Activated CD8-positive, alpha-beta T cell treated with anti-CD3 and anti-CD28 coated beads for 36 hours (primary cell): ENCODE measurements at regions of chr17 and their contacts with region 1.

Region 1: DNA sequence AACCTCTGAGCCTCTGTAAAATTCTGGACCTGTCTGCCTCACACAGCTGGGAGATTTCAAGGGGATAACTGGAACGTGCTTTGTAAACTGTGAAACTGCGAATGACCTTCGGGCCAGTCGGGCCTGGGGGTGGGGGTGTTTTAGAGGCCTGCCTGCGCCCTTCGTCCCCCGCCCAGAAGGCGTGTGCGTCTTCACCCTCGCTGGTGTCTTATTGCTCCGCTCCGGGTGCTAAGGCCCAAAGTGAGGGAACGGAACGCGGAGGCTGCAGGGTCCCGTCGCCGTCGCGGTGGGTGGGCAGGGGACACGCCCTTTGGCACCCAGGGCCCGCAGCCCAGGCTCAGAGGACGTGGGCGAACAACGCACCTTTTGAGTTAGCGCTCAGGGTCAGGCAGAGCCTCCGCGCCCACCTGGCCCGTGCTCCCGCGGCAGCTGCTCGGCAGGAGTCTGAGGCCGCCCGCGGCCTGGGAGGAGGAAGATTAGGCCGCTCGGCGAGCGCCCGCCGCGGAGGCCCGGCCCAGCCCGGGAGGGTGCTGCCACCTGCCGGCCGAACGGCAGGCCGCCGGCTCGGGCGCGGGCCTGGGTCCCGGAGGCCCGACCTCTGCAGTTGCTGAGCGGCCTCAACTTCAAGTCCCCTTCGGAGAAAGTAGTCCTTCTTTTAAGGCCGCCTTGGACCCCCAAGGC is 29.7 kb downstream of the DCAKD start:
- DNase-seq: peak; percentile 65
- ATAC-seq: peak; percentile 68
- H3K4me3 Mint-ChIP-seq: peak overlapping the region; percentile 33
- H3K27ac Mint-ChIP-seq: no peak overlapping the region
- H3K4me1 Mint-ChIP-seq: peaks cover 21% of the 10 kb centered on the region
- H3K27me3 Mint-ChIP-seq: peaks cover 33% of the 10 kb centered on the region
- CTCF ChIP-seq: peak; percentile 96

Region 2: DNA sequence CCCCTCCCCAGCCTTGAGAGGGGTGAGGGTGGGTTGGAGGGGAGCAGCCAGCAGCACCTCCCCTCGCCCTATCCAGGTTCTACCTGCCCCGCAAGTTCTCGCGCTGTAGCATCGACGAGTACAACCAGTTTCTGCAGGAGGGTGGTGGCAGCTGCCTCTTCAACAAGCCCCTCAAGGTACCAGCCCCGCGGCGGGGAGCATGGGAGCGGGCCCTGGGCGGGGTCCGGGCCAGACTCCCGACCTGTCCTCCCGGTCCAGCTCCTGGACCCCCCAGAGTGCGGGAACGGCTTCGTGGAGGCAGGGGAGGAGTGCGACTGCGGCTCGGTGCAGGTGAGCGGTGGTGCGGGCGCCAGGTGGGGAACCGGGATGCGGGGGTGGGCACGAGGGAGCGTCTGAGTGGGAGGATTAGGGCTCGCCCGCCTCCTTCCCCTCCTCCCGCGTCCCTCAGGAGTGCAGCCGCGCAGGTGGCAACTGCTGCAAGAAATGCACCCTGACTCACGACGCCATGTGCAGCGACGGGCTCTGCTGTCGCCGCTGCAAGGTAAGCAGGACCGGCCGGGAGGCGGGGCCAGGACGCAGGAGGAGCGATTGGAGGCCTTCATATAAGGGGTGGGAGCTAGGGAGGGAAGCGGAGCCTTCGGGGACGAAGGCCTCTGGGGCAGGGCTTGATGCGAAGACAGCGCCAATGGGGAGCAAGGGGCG is 246.5 kb before region 1 on chr17:
- CTCF ChIA-PET with region 1: interaction called, 13 read pairs
- POLR2A ChIA-PET with region 1: interaction called, 3 read pairs
- intact Hi-C with region 1: no loop called
- DNase-seq: peak; percentile 99
- ATAC-seq: peak; percentile 97
- H3K4me3 Mint-ChIP-seq: peak overlapping the region; percentile 79
- H3K27ac Mint-ChIP-seq: no peak overlapping the region
- H3K4me1 Mint-ChIP-seq: peaks cover 5% of the 10 kb centered on the region
- H3K27me3 Mint-ChIP-seq: peaks cover 6% of the 10 kb centered on the region
- CTCF ChIP-seq: peak; percentile 60

Region 3: GRCh38 chr17:44919885-44920564 is 101.7 kb before region 1 on chr17:
- CTCF ChIA-PET with region 1: interaction called, 119 read pairs
- POLR2A ChIA-PET with region 1: interaction called, 21 read pairs
- intact Hi-C with region 1: loop called (anchors 5 kb)
- DNase-seq: peak; percentile 83
- ATAC-seq: peak; percentile 95
- H3K4me3 Mint-ChIP-seq: no peak overlapping the region
- H3K27ac Mint-ChIP-seq: no peak overlapping the region
- H3K4me1 Mint-ChIP-seq: peaks cover 4% of the 10 kb centered on the region
- H3K27me3 Mint-ChIP-seq: peaks cover 12% of the 10 kb centered on the region
- CTCF ChIP-seq: peak; percentile 27

Region 4: GRCh38 chr17:44947461-44948314 is 74.1 kb before region 1 on chr17 and contains the start of gene KIF18B:
- CTCF ChIA-PET with region 1: interaction called, 8 read pairs
- POLR2A ChIA-PET with region 1: interaction called, 19 read pairs
- intact Hi-C with region 1: no loop called
- DNase-seq: peak; percentile 96
- ATAC-seq: peak; percentile 97
- H3K4me3 Mint-ChIP-seq: peak within 1 kb of the TSS; percentile 90
- H3K27ac Mint-ChIP-seq: peak within 1 kb of the TSS; percentile 92
- H3K4me1 Mint-ChIP-seq: peaks cover 11% of the 10 kb centered on the region
- H3K27me3 Mint-ChIP-seq: peaks cover 3% of the 10 kb centered on the region
- CTCF ChIP-seq: no peak
- total RNA-seq, gene KIF18B: 38.1 to 40.3 TPM

Region 5: DNA sequence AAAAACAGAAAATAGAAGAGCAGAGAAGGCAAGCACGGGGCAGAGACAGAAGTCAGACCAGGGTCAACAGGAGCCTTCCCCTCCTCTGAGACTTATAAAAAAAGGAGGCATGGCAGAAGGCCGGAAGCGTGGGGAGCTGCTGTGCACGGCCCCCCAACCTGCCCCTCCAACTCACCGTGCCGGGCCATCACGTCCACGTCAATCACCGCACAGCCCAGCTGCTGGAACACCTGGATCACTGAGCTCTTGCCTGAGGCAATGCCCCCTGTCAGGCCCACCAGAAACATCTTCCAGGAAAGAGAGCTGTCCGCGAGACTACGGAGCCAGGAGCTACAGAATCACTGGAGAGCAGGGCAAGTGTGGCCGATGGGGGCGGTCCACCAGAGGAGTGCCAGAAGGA is 12.9 kb after region 1 on chr17:
- CTCF ChIA-PET with region 1: interaction called, 10 read pairs
- POLR2A ChIA-PET with region 1: interaction called, 3 read pairs
- intact Hi-C with region 1: no loop called
- DNase-seq: no peak
- ATAC-seq: no peak
- H3K4me3 Mint-ChIP-seq: no peak overlapping the region
- H3K27ac Mint-ChIP-seq: no peak overlapping the region
- H3K4me1 Mint-ChIP-seq: peaks cover 2% of the 10 kb centered on the region
- H3K27me3 Mint-ChIP-seq: no peaks in the 10 kb centered on the region
- CTCF ChIP-seq: no peak

Region 6: GRCh38 chr17:45060797-45061605 is 39.3 kb after region 1 on chr17 and contains the start of gene NMT1:
- CTCF ChIA-PET with region 1: interaction called, 11 read pairs
- POLR2A ChIA-PET with region 1: interaction called, 3 read pairs
- intact Hi-C with region 1: no loop called
- DNase-seq: peak; percentile 99
- ATAC-seq: peak; percentile 92
- H3K4me3 Mint-ChIP-seq: peak within 1 kb of the TSS; percentile 89
- H3K27ac Mint-ChIP-seq: peak within 1 kb of the TSS; percentile 94
- H3K4me1 Mint-ChIP-seq: peaks cover 37% of the 10 kb centered on the region
- H3K27me3 Mint-ChIP-seq: no peaks in the 10 kb centered on the region
- CTCF ChIP-seq: no peak
- total RNA-seq, gene NMT1: 156 to 169 TPM

Region 7: DNA sequence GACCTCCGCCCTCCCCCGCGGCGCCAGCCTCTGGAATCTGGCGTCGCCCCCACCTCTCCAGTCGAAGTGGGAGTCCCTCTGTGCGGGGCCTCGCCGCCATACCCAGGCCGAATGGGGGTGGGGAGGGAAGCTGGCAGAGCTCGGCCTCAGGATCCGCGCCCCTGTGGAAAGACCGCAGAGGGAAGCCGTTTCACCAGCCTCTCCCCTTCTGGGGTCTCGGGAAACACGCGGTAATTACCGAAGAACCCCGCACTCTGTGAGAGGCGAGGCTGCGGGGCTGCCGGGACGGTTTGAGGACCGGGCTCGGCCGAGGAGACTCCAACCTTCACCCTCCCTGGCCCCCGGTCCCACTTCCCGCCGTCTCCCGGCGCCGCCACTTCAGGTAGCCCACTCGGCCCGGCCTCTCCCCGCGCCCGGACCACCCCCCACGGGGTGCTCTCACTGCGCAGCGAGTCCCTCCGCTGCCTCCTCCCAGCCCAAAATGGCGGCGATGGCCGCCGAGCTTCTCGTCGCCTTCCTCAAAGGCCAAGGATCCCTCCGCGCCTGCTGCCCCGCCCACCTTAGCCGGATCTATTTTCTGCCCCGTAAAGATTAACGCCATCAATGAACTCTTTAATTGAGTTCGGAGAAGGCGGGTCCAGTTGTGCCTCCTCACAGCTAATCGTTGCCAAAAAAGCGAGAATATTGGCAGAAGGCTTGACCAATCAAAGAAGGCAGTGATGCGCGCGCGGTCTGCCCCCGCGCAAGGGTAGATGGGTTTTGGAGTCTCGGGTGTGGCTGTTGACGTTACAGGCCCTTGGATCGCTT is 139.5 kb after region 1 on chr17:
- CTCF ChIA-PET with region 1: no interaction called
- POLR2A ChIA-PET with region 1: no interaction called
- intact Hi-C with region 1: no loop called
- DNase-seq: peak; percentile 99
- ATAC-seq: peak; percentile 97
- H3K4me3 Mint-ChIP-seq: peak overlapping the region; percentile 95
- H3K27ac Mint-ChIP-seq: peak overlapping the region; percentile 99
- H3K4me1 Mint-ChIP-seq: peaks cover 39% of the 10 kb centered on the region
- H3K27me3 Mint-ChIP-seq: no peaks in the 10 kb centered on the region
- CTCF ChIP-seq: no peak